Naive thymus-derived CD4-positive, alpha-beta T cell (primary cell): ENCODE measurements at regions of chr2 and their contacts with region 1.

Region 1: DNA sequence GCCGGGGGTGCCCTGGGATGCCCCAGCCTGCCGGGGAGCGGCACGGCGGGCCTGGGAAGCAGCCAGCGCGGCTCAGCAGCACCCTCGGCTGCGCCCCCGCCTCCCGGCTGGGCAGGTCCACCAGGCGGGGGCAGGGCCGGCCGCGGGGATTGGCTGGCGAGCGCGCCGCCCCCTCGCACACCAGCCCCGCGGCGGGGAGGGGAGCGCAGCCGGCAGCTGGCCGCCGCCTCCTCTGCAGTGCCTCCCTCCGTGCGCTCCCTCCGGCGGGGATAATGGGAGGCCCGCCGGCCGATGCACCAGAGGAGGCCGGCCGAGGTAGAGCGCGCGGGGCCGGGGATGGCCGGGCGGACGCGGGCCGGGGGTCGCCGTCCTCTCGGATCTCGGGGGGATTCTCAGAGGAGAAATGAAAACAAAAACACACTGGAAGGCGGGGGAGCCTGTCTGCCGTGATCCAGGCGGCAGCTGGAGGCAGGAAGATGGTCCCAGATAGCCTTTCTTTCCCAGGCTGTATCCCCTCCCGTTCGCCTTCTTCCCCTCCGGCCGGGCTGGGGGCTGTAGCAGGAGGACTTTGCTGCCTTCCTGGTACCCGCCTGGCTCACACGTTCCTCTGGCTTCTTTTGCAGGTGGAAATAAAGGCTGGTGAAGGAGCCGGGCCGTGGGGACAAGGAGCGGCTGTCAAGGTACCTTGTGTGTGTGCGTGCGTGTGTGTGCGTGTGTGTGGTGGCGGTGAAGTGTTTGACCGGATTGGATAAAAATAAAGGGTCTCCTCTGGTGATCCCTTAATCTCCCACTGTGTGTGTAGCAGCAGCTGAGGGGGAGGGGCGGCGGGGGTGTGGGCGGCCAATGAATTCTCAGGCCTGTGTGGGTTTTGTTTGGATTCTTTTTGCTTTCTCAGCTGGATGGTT is 18.0 kb downstream of the TET3 start:
- DNase-seq: peak; percentile 71 to 89 (median 79)
- ATAC-seq: peak; percentile 95
- H3K4me3 ChIP-seq: peak overlapping the region; percentile 49
- H3K4me3 Mint-ChIP-seq: peak overlapping the region; percentile 82 to 95 (median 86)
- H3K27ac ChIP-seq: peak overlapping the region; percentile 67
- H3K27ac Mint-ChIP-seq: peak overlapping the region in 8 of 9 donors; percentile 59 to 92 (median 78)
- H3K4me1 ChIP-seq: peaks cover 9 to 35% of the 10 kb centered on the region in 2 donors
- H3K4me1 Mint-ChIP-seq: peaks cover 56 to 89% (median 75%) of the 10 kb centered on the region in 7 donors
- H3K27me3 ChIP-seq: no peaks in the 10 kb centered on the region
- H3K27me3 Mint-ChIP-seq: no peaks in the 10 kb centered on the region

Region 2: GRCh38 chr2:72887754-72888437 is 1114.8 kb before region 1 on chr2:
- CTCF ChIA-PET with region 1: no interaction called
- POLR2A ChIA-PET with region 1: no interaction called
- intact Hi-C with region 1: no loop called
- DNase-seq: peak in 8 of 9 donors; percentile 10 to 63 (median 28)
- ATAC-seq: peak; percentile 68
- H3K4me3 ChIP-seq: peak overlapping the region; percentile 43
- H3K4me3 Mint-ChIP-seq: peak overlapping the region; percentile 71 to 86 (median 80)
- H3K27ac ChIP-seq: no peak overlapping the region
- H3K27ac Mint-ChIP-seq: no peak overlapping the region
- H3K4me1 ChIP-seq: peaks cover 0 to 7% of the 10 kb centered on the region in 2 donors
- H3K4me1 Mint-ChIP-seq: peaks cover 0 to 15% (median 9%) of the 10 kb centered on the region in 7 donors
- H3K27me3 ChIP-seq: peaks cover 0 to 6% of the 10 kb centered on the region in 2 donors
- H3K27me3 Mint-ChIP-seq: peaks cover 35 to 72% (median 70%) of the 10 kb centered on the region in 5 donors

Region 3: GRCh38 chr2:73939419-73939818 is 63.3 kb before region 1 on chr2:
- CTCF ChIA-PET with region 1: no interaction called
- POLR2A ChIA-PET with region 1: no interaction called
- intact Hi-C with region 1: loop called in 1 of 2 experiments (anchors 1 kb)
- DNase-seq: peak in 7 of 9 donors; percentile 33 to 59 (median 46)
- ATAC-seq: peak; percentile 78
- H3K4me3 ChIP-seq: no peak overlapping the region
- H3K4me3 Mint-ChIP-seq: peak overlapping the region in 8 of 10 donors; percentile 8 to 39 (median 29)
- H3K27ac ChIP-seq: no peak overlapping the region
- H3K27ac Mint-ChIP-seq: peak overlapping the region in 7 of 9 donors; percentile 40 to 81 (median 59)
- H3K4me1 ChIP-seq: peaks cover 17 to 20% of the 10 kb centered on the region in 2 donors
- H3K4me1 Mint-ChIP-seq: peaks cover 50 to 91% (median 80%) of the 10 kb centered on the region in 7 donors
- H3K27me3 ChIP-seq: no peaks in the 10 kb centered on the region
- H3K27me3 Mint-ChIP-seq: no peaks in the 10 kb centered on the region

Region 4: GRCh38 chr2:73963385-73964120 is 39.2 kb before region 1 on chr2:
- CTCF ChIA-PET with region 1: no interaction called
- POLR2A ChIA-PET with region 1: no interaction called
- intact Hi-C with region 1: loop called in 1 of 2 experiments (anchors 1 kb)
- DNase-seq: no peak
- ATAC-seq: peak; percentile 51
- H3K4me3 ChIP-seq: no peak overlapping the region
- H3K4me3 Mint-ChIP-seq: peak overlapping the region in 4 of 10 donors; percentile 8 to 48 (median 28)
- H3K27ac ChIP-seq: no peak overlapping the region
- H3K27ac Mint-ChIP-seq: peak overlapping the region; percentile 11 to 84 (median 56)
- H3K4me1 ChIP-seq: peaks cover 3 to 4% of the 10 kb centered on the region in 2 donors
- H3K4me1 Mint-ChIP-seq: peaks cover 14 to 52% (median 40%) of the 10 kb centered on the region in 7 donors
- H3K27me3 ChIP-seq: no peaks in the 10 kb centered on the region
- H3K27me3 Mint-ChIP-seq: no peaks in the 10 kb centered on the region

Region 5: DNA sequence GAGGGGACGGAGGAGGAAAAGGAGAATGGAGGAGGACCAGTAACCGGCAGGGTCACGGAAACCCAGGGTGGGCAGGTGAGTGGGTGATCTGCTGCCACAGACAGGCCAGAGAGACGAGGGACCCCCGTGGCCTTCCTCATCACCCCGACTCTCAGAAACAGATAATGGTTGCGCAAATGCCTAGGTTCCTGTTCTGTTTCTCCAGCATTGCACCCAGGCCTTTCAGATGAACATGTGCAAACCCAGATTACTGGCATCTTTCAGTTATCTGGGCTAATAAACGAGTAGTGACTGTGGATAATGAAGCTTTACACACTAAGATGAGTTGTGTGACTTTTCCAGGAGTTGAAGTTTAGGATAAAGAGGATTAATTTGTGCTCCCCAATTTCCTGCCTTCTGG is 28.5 kb after region 1 on chr2:
- CTCF ChIA-PET with region 1: interaction called, 3 read pairs
- POLR2A ChIA-PET with region 1: interaction called, 4 read pairs
- intact Hi-C with region 1: loop called in 1 of 2 experiments (anchors 1 kb)
- DNase-seq: no peak
- ATAC-seq: no peak
- H3K4me3 ChIP-seq: no peak overlapping the region
- H3K4me3 Mint-ChIP-seq: peak overlapping the region in 9 of 10 donors; percentile 33 to 99 (median 83)
- H3K27ac ChIP-seq: no peak overlapping the region
- H3K27ac Mint-ChIP-seq: peak overlapping the region in 8 of 9 donors; percentile 40 to 97 (median 88)
- H3K4me1 ChIP-seq: peaks cover 32 to 62% of the 10 kb centered on the region in 2 donors
- H3K4me1 Mint-ChIP-seq: peaks cover 49 to 88% (median 78%) of the 10 kb centered on the region in 7 donors
- H3K27me3 ChIP-seq: no peaks in the 10 kb centered on the region
- H3K27me3 Mint-ChIP-seq: no peaks in the 10 kb centered on the region

Region 6: DNA sequence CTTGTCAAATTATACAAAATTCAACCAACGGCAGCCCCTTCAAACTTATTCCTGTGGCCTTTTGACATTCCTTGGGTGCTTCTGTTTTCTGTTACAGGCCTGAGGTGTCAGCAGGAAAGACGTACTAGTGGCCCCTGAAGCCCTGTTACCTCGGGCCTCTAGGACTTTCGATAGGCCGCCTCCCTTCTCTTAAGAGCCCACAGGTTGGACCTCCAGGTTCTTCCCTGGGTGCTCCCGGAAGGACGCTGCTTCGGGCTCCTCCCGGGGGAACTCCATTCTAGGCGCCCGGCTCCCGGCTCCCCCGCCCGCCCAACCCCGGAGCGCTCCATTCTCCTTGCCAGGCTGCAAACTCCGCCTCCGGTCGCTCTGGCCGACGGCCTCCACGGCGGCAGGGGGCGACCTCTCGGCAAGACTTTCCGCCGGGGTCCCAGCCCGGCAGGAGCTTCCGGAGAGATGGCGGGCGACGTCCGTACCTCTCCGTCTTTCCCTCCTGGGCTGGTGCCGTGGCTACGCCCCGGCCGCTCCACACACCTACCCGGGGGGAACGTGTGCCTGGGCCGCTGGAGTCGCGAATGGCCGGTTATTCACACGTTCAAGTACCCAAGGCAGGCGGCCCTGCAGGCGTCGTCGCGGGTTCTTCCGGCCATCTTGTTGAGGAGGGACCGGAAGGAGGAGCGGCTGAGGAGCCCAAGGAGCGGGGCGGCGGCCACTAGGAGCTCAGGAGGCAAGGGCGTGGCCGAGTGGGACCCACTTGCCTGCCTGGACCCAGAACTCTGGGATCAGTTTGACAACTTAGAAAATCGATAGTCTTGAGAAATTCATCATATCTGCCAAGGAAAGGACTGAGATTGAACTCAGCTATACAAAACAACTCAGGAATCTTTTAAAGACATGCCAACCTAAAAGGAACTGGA is 117.4 kb after region 1 on chr2:
- CTCF ChIA-PET with region 1: interaction called, 3 read pairs
- POLR2A ChIA-PET with region 1: interaction called, 5 read pairs
- intact Hi-C with region 1: loop called in 1 of 2 experiments (anchors 1 kb)
- DNase-seq: peak; percentile 69 to 91 (median 80)
- ATAC-seq: peak; percentile 98
- H3K4me3 ChIP-seq: peak overlapping the region; percentile 89
- H3K4me3 Mint-ChIP-seq: peak overlapping the region; percentile 82 to 92 (median 88)
- H3K27ac ChIP-seq: peak overlapping the region; percentile 83
- H3K27ac Mint-ChIP-seq: peak overlapping the region; percentile 79 to 96 (median 91)
- H3K4me1 ChIP-seq: no peaks in the 10 kb centered on the region
- H3K4me1 Mint-ChIP-seq: peaks cover 8 to 12% (median 9%) of the 10 kb centered on the region in 7 donors
- H3K27me3 ChIP-seq: no peaks in the 10 kb centered on the region
- H3K27me3 Mint-ChIP-seq: peaks cover 0 to 5% (median 2%) of the 10 kb centered on the region in 5 donors